A673 (cell line): ENCODE measurements at regions of chr5 and their contacts with region 1.

Region 1: DNA sequence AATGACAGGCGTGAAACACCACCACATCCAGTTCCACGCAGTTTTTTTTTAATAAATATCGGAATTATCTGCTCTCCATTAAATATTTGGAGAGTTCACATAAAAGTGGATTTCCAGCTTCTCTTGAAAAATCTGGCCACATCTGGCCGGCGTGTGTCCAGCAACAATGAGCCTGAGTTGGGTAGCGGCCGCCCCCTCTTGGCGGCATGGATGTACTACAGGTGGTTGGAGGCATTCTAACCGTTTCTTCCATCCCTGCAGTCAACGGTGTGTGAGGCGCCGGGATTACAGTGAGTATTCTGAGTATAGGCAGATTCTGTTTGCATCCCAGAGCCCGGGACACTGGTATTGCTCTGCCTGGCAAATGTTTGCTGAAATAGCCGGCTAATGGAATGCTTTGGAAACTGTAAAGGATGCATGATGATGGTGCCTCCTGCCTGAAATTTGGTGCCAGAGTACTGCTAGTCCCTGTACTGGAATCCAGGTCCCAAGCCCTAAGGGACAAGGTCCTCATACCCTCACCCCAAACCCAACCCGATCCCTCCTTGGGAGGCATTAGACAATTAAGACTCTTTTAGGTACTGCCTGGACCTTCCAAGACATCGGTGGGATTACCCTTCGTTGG is 13.6 kb upstream of the GM2A start:
- DNase-seq: peak; percentile 64
- H3K4me3 ChIP-seq: no peak overlapping the region
- H3K27ac ChIP-seq: no peak overlapping the region
- H3K4me1 ChIP-seq: no peaks in the 10 kb centered on the region
- H3K27me3 ChIP-seq: no peaks in the 10 kb centered on the region
- CTCF ChIP-seq: peak; percentile 94

Region 2: DNA sequence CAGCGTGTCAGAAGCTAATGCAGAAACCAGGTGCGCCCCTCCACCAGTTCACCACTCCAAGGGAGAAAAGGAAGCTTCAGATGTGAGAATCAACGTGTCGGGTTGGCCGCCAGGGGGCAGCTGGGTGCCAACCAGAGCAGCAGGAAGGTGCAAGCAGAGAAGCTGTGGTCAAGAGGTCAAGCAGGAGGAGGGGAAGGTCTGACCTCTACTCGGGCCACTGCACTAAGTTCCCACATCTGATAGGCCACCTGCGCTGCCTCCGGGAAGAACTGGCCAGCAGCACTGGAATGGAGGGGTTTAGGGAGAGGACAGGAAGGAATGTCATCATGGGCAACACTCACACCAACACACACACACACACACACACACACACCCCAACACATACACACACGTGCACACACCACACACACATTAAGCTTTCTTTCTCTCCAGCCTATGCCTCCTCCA is 113.1 kb before region 1 on chr5:
- CTCF ChIA-PET with region 1: interaction called, 10 read pairs
- POLR2A ChIA-PET with region 1: no interaction called
- intact Hi-C with region 1: loop called (anchors 2 kb)
- DNase-seq: peak; percentile 28
- H3K4me3 ChIP-seq: no peak overlapping the region
- H3K27ac ChIP-seq: no peak overlapping the region
- H3K4me1 ChIP-seq: peaks cover 13% of the 10 kb centered on the region
- H3K27me3 ChIP-seq: no peaks in the 10 kb centered on the region
- CTCF ChIP-seq: peak; percentile 88